ENCODE measurements at regions of chr3 and their contacts with region 1.

Region 1: GRCh38 chr3:132722164-132723024 is at the start of gene NPHP3:
- DNase-seq: peak; percentile 82
- ATAC-seq: peak; percentile 80
- H3K4me3 Mint-ChIP-seq: peak within 1 kb of the TSS; percentile 90
- H3K27ac Mint-ChIP-seq: peak within 1 kb of the TSS; percentile 85
- H3K4me1 Mint-ChIP-seq: peaks cover 31% of the 10 kb centered on the region
- H3K27me3 Mint-ChIP-seq: no peaks in the 10 kb centered on the region
- CTCF ChIP-seq: no peak
- total RNA-seq, gene NPHP3: 20.2 and 23.2 TPM in 2 replicates

Region 2: GRCh38 chr3:130892759-130893375 is 1829.5 kb before region 1 on chr3:
- CTCF ChIA-PET with region 1: no interaction called
- POLR2A ChIA-PET with region 1: no interaction called
- intact Hi-C with region 1: loop called (anchors 2 kb)
- DNase-seq: no peak
- ATAC-seq: peak; percentile 43
- H3K4me3 Mint-ChIP-seq: peak overlapping the region; percentile 95
- H3K27ac Mint-ChIP-seq: peak overlapping the region; percentile 99
- H3K4me1 Mint-ChIP-seq: peaks cover 31% of the 10 kb centered on the region
- H3K27me3 Mint-ChIP-seq: peaks cover 1% of the 10 kb centered on the region
- CTCF ChIP-seq: peak; percentile 30

Region 3: DNA sequence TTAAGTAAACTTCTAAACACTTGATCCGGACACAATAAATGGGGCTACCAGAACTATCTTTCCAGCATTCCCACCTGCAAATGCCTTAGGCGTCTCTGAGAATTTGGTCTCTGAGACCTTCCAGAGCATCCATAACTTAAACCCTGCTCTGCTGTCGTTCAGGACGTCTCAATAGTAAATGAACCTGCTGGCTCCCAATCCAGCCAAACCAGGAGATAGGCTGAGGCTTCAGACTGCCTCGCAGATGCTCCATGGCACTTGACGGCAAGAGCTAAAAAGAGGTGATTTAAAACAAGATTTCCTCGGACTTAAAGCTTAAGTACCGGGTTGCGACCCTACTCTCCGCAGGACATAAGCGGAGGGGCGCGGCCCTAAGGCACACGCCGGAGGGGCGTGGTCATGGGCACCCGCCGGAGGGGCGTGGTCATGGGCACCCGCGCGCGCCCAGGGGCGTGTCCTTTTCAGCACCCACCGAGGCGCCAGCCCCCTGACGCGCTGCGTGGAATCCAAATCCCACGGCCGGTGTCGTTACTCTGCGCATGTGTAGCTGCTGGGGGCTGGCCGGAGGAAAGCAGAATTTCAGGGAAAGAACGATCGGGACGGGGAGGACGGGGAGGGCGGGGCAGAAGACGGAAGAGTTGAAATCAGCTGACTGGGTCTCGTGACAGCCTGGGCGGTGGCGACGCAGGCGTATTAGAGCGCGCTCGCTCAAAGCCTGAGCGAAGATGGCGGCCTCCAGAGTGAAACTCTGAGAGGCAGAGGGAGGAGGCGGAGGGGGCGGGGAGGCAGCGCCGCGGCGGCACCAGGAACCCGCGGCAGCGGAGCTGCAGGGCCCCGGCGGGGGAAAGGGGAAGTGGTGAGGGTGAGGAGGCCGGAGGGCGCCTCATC is 305.3 kb before region 1 on chr3 and contains the start of gene DNAJC13:
- CTCF ChIA-PET with region 1: no interaction called
- POLR2A ChIA-PET with region 1: no interaction called
- intact Hi-C with region 1: loop called (anchors 1 kb)
- DNase-seq: peak; percentile 93
- ATAC-seq: peak; percentile 89
- H3K4me3 Mint-ChIP-seq: peak within 1 kb of the TSS; percentile 99
- H3K27ac Mint-ChIP-seq: peak within 1 kb of the TSS; percentile 98
- H3K4me1 Mint-ChIP-seq: peaks cover 32% of the 10 kb centered on the region
- H3K27me3 Mint-ChIP-seq: no peaks in the 10 kb centered on the region
- CTCF ChIP-seq: no peak
- total RNA-seq, gene DNAJC13: 35.9 and 39.8 TPM in 2 replicates

Region 4: DNA sequence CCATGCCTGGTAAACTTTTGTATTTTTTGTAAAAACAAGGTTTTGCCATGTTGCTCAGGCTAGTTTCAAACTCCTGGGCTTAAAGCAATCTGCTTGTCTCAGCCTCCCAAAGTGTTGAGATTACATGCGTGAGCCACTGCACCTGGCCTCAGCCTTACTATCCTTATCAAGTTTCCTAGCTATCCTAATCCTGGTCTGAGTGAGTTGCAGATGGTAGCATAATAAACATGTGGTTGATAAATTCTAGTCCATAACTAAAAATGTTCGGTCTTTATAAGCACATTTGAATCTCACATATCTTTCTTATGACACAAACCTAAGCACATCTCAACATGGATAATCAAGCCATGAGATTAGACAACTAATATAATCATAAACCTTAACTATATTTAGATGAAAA is 18.7 kb before region 1 on chr3:
- CTCF ChIA-PET with region 1: no interaction called
- POLR2A ChIA-PET with region 1: no interaction called
- intact Hi-C with region 1: no loop called
- DNase-seq: no peak
- ATAC-seq: no peak
- H3K4me3 Mint-ChIP-seq: no peak overlapping the region
- H3K27ac Mint-ChIP-seq: no peak overlapping the region
- H3K4me1 Mint-ChIP-seq: no peaks in the 10 kb centered on the region
- H3K27me3 Mint-ChIP-seq: no peaks in the 10 kb centered on the region
- CTCF ChIP-seq: no peak

Region 5: GRCh38 chr3:133197619-133198018 is 475.2 kb after region 1 on chr3:
- CTCF ChIA-PET with region 1: no interaction called
- POLR2A ChIA-PET with region 1: no interaction called
- intact Hi-C with region 1: no loop called
- DNase-seq: no peak
- ATAC-seq: no peak
- H3K4me3 Mint-ChIP-seq: no peak overlapping the region
- H3K27ac Mint-ChIP-seq: no peak overlapping the region
- H3K4me1 Mint-ChIP-seq: no peaks in the 10 kb centered on the region
- H3K27me3 Mint-ChIP-seq: peaks cover 9% of the 10 kb centered on the region
- CTCF ChIP-seq: no peak

Region 6: GRCh38 chr3:133426721-133427120 is 704.3 kb after region 1 on chr3:
- CTCF ChIA-PET with region 1: interaction called, 22 read pairs
- POLR2A ChIA-PET with region 1: interaction called, 3 read pairs
- intact Hi-C with region 1: loop called (anchors 1 kb)
- DNase-seq: no peak
- ATAC-seq: no peak
- H3K4me3 Mint-ChIP-seq: no peak overlapping the region
- H3K27ac Mint-ChIP-seq: no peak overlapping the region
- H3K4me1 Mint-ChIP-seq: peaks cover 15% of the 10 kb centered on the region
- H3K27me3 Mint-ChIP-seq: no peaks in the 10 kb centered on the region
- CTCF ChIP-seq: no peak

Region 7: GRCh38 chr3:133805527-133806475 is 1083.4 kb after region 1 on chr3 and contains the start of gene SRPRB:
- CTCF ChIA-PET with region 1: no interaction called
- POLR2A ChIA-PET with region 1: interaction called, 3 read pairs
- intact Hi-C with region 1: loop called (anchors 1 kb)
- DNase-seq: peak; percentile 89
- ATAC-seq: peak; percentile 98
- H3K4me3 Mint-ChIP-seq: peak within 1 kb of the TSS; percentile 96
- H3K27ac Mint-ChIP-seq: peak within 1 kb of the TSS; percentile 95
- H3K4me1 Mint-ChIP-seq: peaks cover 21% of the 10 kb centered on the region
- H3K27me3 Mint-ChIP-seq: peaks cover 3% of the 10 kb centered on the region
- CTCF ChIP-seq: no peak
- total RNA-seq, gene SRPRB: 36.5 and 38.5 TPM in 2 replicates

Region 8: GRCh38 chr3:134250717-134251220 is 1528.4 kb after region 1 on chr3 and contains the start of gene RYK:
- CTCF ChIA-PET with region 1: no interaction called
- POLR2A ChIA-PET with region 1: no interaction called
- intact Hi-C with region 1: loop called (anchors 1 kb)
- DNase-seq: peak; percentile 86
- ATAC-seq: peak; percentile 74
- H3K4me3 Mint-ChIP-seq: peak within 1 kb of the TSS; percentile 94
- H3K27ac Mint-ChIP-seq: peak within 1 kb of the TSS; percentile 92
- H3K4me1 Mint-ChIP-seq: peaks cover 57% of the 10 kb centered on the region
- H3K27me3 Mint-ChIP-seq: no peaks in the 10 kb centered on the region
- CTCF ChIP-seq: no peak
- total RNA-seq, gene RYK: 34.0 and 38.8 TPM in 2 replicates